PC-3 (cell line): ENCODE measurements at regions of chr2 and their contacts with region 1.

Region 1: DNA sequence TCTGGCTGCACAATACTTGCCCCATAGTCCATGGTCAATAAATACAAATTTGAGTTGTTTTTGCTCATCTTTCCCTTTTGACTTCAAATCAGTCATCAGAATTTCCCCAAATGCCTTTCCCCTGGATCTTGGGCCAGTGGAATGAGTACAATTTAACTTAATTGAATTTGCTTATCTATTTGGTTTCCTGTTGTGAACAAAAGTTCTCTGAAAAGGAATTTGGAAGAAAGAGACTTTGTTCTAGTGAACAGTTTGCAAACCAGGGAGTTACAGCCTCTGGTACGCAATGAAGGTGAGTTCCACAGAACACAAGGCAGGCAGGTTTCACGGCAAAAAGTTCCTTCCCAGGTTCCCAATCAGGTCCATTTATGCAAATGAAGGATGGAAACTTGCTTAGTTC is 1.2 kb upstream of the UGT1A1 start:
- DNase-seq: no peak
- ATAC-seq: no peak
- H3K4me3 ChIP-seq: no peak overlapping the region
- H3K27ac ChIP-seq: no peak overlapping the region
- H3K4me1 ChIP-seq: peaks cover 7% of the 10 kb centered on the region
- H3K27me3 ChIP-seq: no peaks in the 10 kb centered on the region
- CTCF ChIP-seq: no peak

Region 2: DNA sequence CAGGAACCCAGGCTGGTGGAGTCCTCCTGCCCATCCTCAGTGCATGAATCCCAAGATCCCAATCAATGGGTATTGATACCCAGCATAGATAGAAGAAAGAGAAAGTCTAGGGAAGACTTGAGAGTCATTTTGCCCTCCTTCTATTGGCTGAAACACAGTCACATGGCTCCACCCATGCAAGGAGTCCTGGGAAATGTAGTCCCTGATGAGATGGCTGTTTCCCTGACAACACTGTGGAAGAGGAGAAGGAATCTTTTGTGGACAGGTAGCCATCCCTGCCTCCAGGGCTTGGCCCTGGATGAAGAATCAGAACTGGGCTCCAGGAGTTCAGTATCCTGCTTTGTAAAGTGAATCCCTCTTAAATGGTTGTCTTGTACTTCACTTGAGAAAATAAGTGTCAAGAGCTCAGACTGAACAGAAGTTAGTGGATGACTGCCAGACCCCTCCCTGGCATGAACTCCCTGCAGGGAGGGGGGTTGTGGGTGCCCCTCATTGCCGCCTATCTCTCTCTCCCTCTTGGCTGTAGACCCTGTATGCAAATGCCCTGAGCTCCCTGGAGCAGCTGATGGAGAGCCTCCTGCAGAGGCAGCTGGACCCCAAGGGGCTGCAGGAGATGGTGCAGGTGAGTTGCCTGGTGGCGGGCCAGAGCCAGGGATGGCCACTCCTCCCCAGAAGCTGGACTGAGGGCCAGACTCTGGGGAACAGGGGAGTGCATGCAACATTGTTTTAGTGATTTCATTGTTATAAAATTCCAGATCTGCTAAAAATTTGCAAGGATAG is 55.4 kb after region 1 on chr2:
- CTCF ChIA-PET with region 1: no interaction called
- POLR2A ChIA-PET with region 1: no interaction called
- intact Hi-C with region 1: loop called (anchors 2 kb)
- DNase-seq: no peak
- ATAC-seq: no peak; the same call in 1 of the 2 replicates
- H3K4me3 ChIP-seq: no peak overlapping the region
- H3K27ac ChIP-seq: no peak overlapping the region
- H3K4me1 ChIP-seq: no peaks in the 10 kb centered on the region
- H3K27me3 ChIP-seq: no peaks in the 10 kb centered on the region
- CTCF ChIP-seq: no peak